ENCODE measurements at regions of chr12 and their contacts with region 1.

Region 1: GRCh38 chr12:54419088-54419892 is at the start of gene ITGA5:
- DNase-seq: peak; percentile 69
- ATAC-seq: peak; percentile 75
- H3K4me3 ChIP-seq: peak within 1 kb of the TSS; percentile 94
- H3K27ac ChIP-seq: peak within 1 kb of the TSS; percentile 89
- H3K4me1 ChIP-seq: peaks cover 27% of the 10 kb centered on the region
- H3K27me3 ChIP-seq: no peaks in the 10 kb centered on the region
- CTCF ChIP-seq: no peak
- POLR2A ChIP-seq: peak; percentile 77
- RAD21 ChIP-seq: no peak
- total RNA-seq, gene ITGA5: 144 and 159 TPM in 2 replicates

Region 2: GRCh38 chr12:54431911-54432814 is 12.9 kb after region 1 on chr12:
- CTCF ChIA-PET with region 1: interaction called, 3 read pairs
- POLR2A ChIA-PET with region 1: no interaction called
- dilution Hi-C with region 1: no loop called
- in situ Hi-C with region 1: no loop called
- intact Hi-C with region 1: loop called (anchors 1 kb)
- DNase-seq: peak; percentile 80
- ATAC-seq: peak; percentile 58
- H3K4me3 ChIP-seq: no peak overlapping the region
- H3K27ac ChIP-seq: no peak overlapping the region
- H3K4me1 ChIP-seq: peaks cover 22% of the 10 kb centered on the region
- H3K27me3 ChIP-seq: no peaks in the 10 kb centered on the region
- CTCF ChIP-seq: no peak
- POLR2A ChIP-seq: no peak
- RAD21 ChIP-seq: no peak

Region 3: DNA sequence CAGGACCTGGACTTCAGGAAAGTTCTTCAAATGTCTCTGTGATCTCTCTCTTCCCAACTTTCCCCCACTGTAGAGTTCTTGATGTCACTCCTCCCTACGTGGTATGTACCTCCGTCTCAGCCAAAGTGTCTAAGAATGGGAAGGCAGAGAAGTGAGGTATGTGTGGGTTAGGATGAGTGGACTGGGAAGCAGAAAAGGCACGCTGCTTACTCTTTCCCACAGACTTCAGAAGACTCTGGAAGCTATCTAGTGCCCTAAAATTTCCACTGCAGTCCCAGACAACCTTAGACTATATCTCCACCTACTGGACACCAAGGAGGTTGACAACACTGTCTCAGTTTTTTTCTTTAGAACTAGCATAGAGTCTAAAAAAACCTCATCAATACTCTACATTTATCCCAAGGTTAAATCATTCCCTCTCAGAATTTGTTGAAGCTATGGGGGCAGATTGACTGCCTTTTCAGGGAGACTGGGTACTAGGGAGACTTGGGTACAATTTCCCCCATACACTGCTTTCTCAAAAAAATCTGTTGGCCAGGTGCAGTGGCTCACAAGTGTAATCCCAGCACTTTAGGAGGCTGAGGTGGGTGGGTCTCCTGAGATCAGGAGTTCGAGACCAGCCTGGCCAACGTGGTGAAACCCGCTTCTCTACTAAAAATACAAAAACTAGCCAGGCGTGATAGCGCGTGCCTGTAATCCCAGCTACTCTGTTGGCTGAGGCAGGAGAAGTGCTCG is 20.4 kb after region 1 on chr12:
- CTCF ChIA-PET with region 1: interaction called, 9 read pairs
- POLR2A ChIA-PET with region 1: no interaction called
- dilution Hi-C with region 1: no loop called
- in situ Hi-C with region 1: no loop called
- intact Hi-C with region 1: loop called (anchors 2 kb)
- DNase-seq: peak; percentile 86
- ATAC-seq: peak; percentile 98
- H3K4me3 ChIP-seq: no peak overlapping the region
- H3K27ac ChIP-seq: no peak overlapping the region
- H3K4me1 ChIP-seq: peaks cover 4% of the 10 kb centered on the region
- H3K27me3 ChIP-seq: peaks cover 10% of the 10 kb centered on the region
- CTCF ChIP-seq: peak; percentile 95
- POLR2A ChIP-seq: no peak
- RAD21 ChIP-seq: peak; percentile 96

Measured in IMR-90 (cell line).